Heart right ventricle (tissue), 16 donors: ENCODE measurements at regions of chrX and their contacts with region 1.

Region 1: DNA sequence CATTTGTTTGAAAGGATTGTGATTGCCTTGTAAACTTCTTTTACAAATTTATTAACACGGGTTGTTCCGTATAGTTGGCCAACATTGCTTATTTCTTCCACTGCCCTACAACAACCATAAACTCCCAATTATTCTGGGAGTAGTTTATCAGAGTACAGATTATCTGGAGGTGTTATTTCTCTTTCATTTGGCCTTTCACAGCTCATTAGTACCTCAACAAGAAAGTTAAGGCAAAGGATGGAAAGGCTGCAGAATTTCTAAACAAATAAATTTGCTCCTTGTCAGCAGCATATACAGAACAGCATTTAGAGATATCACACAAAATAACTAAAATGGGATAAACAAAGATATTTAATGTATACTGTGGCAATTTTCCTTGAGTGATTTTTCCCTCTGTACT is 548.8 kb downstream of the DMD start:
- DNase-seq: no peak
- ATAC-seq: no peak
- H3K4me3 ChIP-seq: no peak overlapping the region
- H3K27ac ChIP-seq: no peak overlapping the region
- H3K4me1 ChIP-seq: no peaks in the 10 kb centered on the region
- H3K27me3 ChIP-seq: no peaks in the 10 kb centered on the region
- CTCF ChIP-seq: no peak

Region 2: GRCh38 chrX:31449965-31450364 is 1212.6 kb before region 1 on chrX:
- intact Hi-C with region 1: no loop called
- DNase-seq: no peak
- ATAC-seq: no peak
- H3K4me3 ChIP-seq: no peak overlapping the region
- H3K27ac ChIP-seq: no peak overlapping the region
- H3K4me1 ChIP-seq: no peaks in the 10 kb centered on the region
- H3K27me3 ChIP-seq: no peaks in the 10 kb centered on the region
- CTCF ChIP-seq: no peak

Region 3: GRCh38 chrX:32618154-32618553 is 44.4 kb before region 1 on chrX:
- intact Hi-C with region 1: loop called in 1 of 10 experiments (anchors 2 kb)
- DNase-seq: no peak
- ATAC-seq: no peak
- H3K4me3 ChIP-seq: no peak overlapping the region
- H3K27ac ChIP-seq: no peak overlapping the region
- H3K4me1 ChIP-seq: no peaks in the 10 kb centered on the region
- H3K27me3 ChIP-seq: no peaks in the 10 kb centered on the region
- CTCF ChIP-seq: no peak

Region 4: DNA sequence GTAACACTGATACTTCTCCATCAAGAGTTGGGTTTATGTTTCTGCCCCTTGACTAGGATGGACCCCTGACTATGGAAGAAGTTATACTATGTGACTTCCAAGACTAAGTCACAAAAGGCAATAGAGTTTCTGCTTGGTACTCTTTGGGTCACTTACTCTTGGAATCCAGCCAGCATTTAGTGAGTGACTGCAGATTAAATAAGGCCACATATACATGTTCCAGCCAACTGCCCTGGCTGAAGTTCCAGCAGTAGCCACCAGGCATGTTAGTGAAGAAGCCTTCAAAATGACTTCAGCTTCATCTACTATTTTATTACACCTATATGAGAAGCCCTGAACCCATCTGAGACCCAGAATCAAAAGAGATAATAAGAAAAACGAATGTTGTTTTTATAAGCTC is 24.9 kb after region 1 on chrX:
- intact Hi-C with region 1: no loop called
- DNase-seq: no peak
- ATAC-seq: peak in 4 of 8 donors; percentile 35 to 61 (median 48)
- H3K4me3 ChIP-seq: no peak overlapping the region
- H3K27ac ChIP-seq: no peak overlapping the region
- H3K4me1 ChIP-seq: no peaks in the 10 kb centered on the region
- H3K27me3 ChIP-seq: no peaks in the 10 kb centered on the region
- CTCF ChIP-seq: peak in 2 of 9 donors; percentile 15 to 22

Region 5: GRCh38 chrX:32985544-32985943 is 323.0 kb after region 1 on chrX:
- intact Hi-C with region 1: no loop called
- DNase-seq: peak in 1 of 2 donors; percentile 4
- ATAC-seq: peak in 1 of 8 donors; percentile 37
- H3K4me3 ChIP-seq: no peak overlapping the region
- H3K27ac ChIP-seq: no peak overlapping the region
- H3K4me1 ChIP-seq: peaks cover 0 to 27% (median 0%) of the 10 kb centered on the region in 9 donors
- H3K27me3 ChIP-seq: no peaks in the 10 kb centered on the region
- CTCF ChIP-seq: no peak